HCT116 (cell line): ENCODE measurements at regions of chr5 and their contacts with region 1.

Region 1: DNA sequence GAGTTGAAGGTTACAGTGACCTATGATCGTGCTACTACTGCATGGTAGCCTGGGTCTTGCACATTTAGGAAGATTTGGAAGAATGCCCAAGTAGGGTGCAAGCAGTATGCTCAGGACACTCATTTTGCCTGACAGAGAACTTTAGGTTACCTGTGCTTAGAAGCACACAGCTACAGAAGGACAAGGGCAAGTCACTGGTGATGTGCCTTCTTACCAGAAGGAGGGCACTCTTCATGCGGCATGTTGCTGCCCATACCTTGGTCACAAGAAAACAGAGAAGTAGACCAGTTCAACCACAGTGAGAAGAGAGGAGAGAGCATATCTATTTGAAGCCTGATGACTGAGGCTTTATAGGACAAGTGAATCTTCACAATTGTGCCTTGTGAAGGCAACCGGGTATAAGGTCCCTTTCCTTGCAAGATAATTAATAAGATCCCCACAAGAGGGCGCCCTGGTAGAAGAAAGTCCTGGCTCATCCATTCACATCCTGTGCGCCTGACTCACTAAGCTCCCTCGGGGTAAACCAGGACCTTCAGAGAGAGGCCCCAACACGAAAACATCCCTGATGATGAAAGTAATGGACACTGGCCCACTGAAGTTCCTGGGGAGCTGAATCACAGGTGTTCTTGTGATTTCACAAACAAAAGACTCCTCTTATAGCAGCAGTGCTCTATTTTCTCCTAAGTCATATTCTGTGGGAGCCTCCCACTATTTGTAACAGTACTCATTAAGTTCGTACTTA is 38.1 kb upstream of the STARD4 start:
- DNase-seq: peak; percentile 71
- ATAC-seq: peak; percentile 99
- H3K4me3 ChIP-seq: no peak overlapping the region
- H3K27ac ChIP-seq: no peak overlapping the region
- H3K4me1 ChIP-seq: no peaks in the 10 kb centered on the region
- H3K27me3 ChIP-seq: peaks cover 5% of the 10 kb centered on the region; the same call in 1 of the 2 replicates
- CTCF ChIP-seq: peak; percentile 45 to 68 (median 60); a peak in 4 of 6 replicates
- POLR2A ChIP-seq: no peak
- RAD21 ChIP-seq: peak; percentile 81

Region 2: GRCh38 chr5:111158105-111158744 is 392.2 kb before region 1 on chr5:
- CTCF ChIA-PET with region 1: interaction called, 4 read pairs
- POLR2A ChIA-PET with region 1: no interaction called
- RAD21 ChIA-PET with region 1: no interaction called
- intact Hi-C with region 1: loop called (anchors 10 kb)
- DNase-seq: peak; percentile 69
- ATAC-seq: peak; percentile 88
- H3K4me3 ChIP-seq: no peak overlapping the region
- H3K27ac ChIP-seq: no peak overlapping the region
- H3K4me1 ChIP-seq: no peaks in the 10 kb centered on the region
- H3K27me3 ChIP-seq: no peaks in the 10 kb centered on the region
- CTCF ChIP-seq: peak; percentile 77 to 99 (median 99)
- POLR2A ChIP-seq: no peak
- RAD21 ChIP-seq: peak; percentile 95

Region 3: GRCh38 chr5:111237470-111237869 is 313.0 kb before region 1 on chr5:
- CTCF ChIA-PET with region 1: no interaction called
- POLR2A ChIA-PET with region 1: no interaction called
- RAD21 ChIA-PET with region 1: no interaction called
- intact Hi-C with region 1: no loop called
- DNase-seq: no peak
- ATAC-seq: no peak
- H3K4me3 ChIP-seq: no peak overlapping the region
- H3K27ac ChIP-seq: no peak overlapping the region
- H3K4me1 ChIP-seq: no peaks in the 10 kb centered on the region
- H3K27me3 ChIP-seq: peaks cover 4% of the 10 kb centered on the region; the same call in 1 of the 2 replicates
- CTCF ChIP-seq: no peak
- POLR2A ChIP-seq: no peak
- RAD21 ChIP-seq: no peak

Region 4: GRCh38 chr5:111394580-111394979 is 155.9 kb before region 1 on chr5:
- CTCF ChIA-PET with region 1: no interaction called
- POLR2A ChIA-PET with region 1: no interaction called
- RAD21 ChIA-PET with region 1: no interaction called
- intact Hi-C with region 1: no loop called
- DNase-seq: no peak
- ATAC-seq: no peak
- H3K4me3 ChIP-seq: no peak overlapping the region
- H3K27ac ChIP-seq: no peak overlapping the region
- H3K4me1 ChIP-seq: peaks cover 0 to 3% of the 10 kb centered on the region in 2 experiments; a peak in 2 of 4 replicates
- H3K27me3 ChIP-seq: no peaks in the 10 kb centered on the region
- CTCF ChIP-seq: no peak
- POLR2A ChIP-seq: no peak
- RAD21 ChIP-seq: no peak

Region 5: DNA sequence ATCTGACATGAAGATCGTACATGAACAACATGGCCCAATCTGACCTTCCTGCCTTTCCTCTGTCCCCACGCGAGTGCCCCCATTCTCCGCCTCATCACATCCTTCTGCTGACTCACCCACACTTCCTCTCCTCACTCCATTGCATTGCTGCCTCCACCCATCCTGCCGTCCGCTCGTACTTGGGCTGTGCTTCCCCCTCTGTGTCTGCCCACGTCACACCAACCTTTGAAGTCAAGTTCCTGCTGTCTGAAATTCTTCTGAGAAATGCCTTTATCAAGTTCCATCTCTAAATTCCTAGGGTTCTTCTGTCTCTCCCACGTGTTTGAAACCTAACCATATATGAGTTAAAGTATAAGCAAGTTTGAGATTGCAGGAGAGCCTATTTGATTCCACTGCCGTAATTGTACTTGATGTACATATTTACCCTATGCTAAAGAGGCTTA is 20.1 kb before region 1 on chr5:
- CTCF ChIA-PET with region 1: interaction called, 16 read pairs
- POLR2A ChIA-PET with region 1: interaction called, 5 read pairs
- RAD21 ChIA-PET with region 1: no interaction called
- intact Hi-C with region 1: no loop called
- DNase-seq: peak; percentile 61
- ATAC-seq: peak; percentile 97
- H3K4me3 ChIP-seq: peak overlapping the region; percentile 7 to 31
- H3K27ac ChIP-seq: peak overlapping the region; percentile 49
- H3K4me1 ChIP-seq: peaks cover 0 to 19% of the 10 kb centered on the region in 2 experiments; a peak in 3 of 4 replicates
- H3K27me3 ChIP-seq: no peaks in the 10 kb centered on the region
- CTCF ChIP-seq: no peak
- POLR2A ChIP-seq: peak; percentile 37
- RAD21 ChIP-seq: no peak

Region 6: DNA sequence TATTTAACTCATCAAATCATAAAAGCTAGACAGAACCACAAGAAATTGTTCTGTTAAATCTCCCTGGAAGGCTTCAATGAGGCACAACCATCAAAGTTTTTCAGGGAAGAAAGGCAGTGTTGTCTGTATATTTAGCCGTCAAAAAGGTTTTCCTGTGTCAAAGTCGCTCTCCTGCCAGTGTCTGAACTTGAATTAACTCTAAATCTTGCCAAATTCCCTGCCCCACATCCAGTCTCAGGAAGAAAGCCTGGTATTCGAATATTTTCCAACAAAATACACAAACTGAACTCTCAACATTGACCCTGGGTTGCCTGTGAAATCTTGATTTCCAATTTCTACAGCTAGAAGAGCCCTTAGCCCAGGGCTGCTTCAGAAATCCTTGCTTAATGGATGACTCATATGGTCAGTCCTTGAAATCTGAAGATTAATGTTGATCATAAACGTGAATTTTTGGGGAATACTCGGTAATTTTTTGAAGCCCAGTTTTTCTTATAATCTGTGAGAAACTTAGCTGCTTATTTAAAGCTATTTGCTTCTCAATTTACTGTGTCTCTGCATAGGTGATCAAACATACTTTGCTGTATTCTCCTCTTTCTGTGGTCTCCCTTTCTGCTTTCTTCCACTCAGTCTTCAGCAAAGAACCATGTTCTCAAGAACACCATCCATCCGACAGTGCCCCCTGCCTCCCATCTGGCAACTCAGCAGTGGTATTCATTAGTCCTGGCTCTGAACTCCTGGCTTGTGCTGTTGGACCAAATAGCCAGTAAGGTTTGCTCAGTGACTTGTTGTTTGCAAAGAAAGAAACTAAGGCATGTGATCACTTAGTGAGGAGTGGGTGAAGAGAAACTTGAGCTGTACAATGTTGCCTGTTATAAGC is 147.7 kb after region 1 on chr5:
- CTCF ChIA-PET with region 1: no interaction called
- POLR2A ChIA-PET with region 1: no interaction called
- RAD21 ChIA-PET with region 1: no interaction called
- intact Hi-C with region 1: loop called (anchors 5 kb)
- DNase-seq: no peak
- ATAC-seq: peak; percentile 49; the same call in 1 of the 2 replicates
- H3K4me3 ChIP-seq: no peak overlapping the region
- H3K27ac ChIP-seq: no peak overlapping the region
- H3K4me1 ChIP-seq: no peaks in the 10 kb centered on the region
- H3K27me3 ChIP-seq: no peaks in the 10 kb centered on the region; the same call in 1 of the 2 replicates
- CTCF ChIP-seq: peak in 2 of 3 experiments; percentile 21 to 32; a peak in 2 of 6 replicates
- POLR2A ChIP-seq: no peak
- RAD21 ChIP-seq: peak; percentile 35; the same call in 1 of the 2 replicates

Region 7: DNA sequence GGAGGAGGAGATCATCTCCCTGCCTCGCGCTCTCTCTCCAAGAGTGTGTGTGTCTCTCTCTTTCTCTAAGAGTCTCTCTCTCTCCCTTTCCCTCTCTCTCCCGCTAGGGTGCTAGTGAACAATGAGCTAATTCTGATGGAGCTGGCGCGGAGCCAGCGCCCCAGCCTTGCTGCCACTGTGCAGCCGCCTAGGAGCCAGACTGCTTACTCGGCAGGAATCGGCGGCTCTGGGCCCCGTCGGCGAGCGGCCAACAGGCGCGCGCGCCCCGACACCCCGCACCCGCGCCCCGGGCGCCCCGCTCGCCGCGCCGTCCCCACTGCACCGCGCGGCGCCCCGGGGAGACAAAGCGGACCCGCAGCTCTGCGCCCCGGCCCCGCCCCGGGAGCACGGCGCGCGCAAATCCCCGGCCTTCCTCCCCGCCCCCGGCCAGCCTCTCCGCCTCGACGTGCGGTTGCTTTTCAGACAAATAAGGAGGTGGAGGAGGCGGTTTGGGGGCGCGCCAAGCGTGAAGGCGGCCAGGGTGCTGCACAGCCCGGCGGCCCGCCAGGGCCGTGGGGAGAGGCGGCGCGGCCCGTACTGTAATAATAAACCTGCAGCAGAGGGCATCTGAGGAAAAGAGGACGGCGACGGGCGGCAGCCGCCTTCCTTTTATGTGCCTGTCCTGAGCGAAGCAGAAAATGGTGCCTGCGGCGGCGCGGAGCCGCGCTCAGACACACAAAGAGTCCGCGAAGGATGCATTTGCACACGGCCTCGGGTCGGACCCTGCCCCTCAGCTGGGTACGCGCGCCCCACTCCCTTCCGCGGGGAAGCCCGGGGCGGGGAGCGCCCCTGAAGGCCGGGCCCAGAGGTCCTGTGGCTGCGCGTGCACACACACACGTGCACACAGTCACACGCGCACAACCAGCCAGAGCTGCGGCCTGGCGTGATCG is 207.2 kb after region 1 on chr5:
- CTCF ChIA-PET with region 1: interaction called, 5 read pairs
- POLR2A ChIA-PET with region 1: interaction called, 3 read pairs
- RAD21 ChIA-PET with region 1: no interaction called
- intact Hi-C with region 1: loop called (anchors 5 kb)
- DNase-seq: peak; percentile 71
- ATAC-seq: peak; percentile 88
- H3K4me3 ChIP-seq: peak overlapping the region; percentile 44 to 61
- H3K27ac ChIP-seq: peak overlapping the region; percentile 64
- H3K4me1 ChIP-seq: peaks cover 3 to 15% of the 10 kb centered on the region in 2 experiments
- H3K27me3 ChIP-seq: no peaks in the 10 kb centered on the region
- CTCF ChIP-seq: peak in 2 of 3 experiments; percentile 38 to 44; a peak in 3 of 6 replicates
- POLR2A ChIP-seq: peak; percentile 14
- RAD21 ChIP-seq: 0 out of 2 replicates have a peak, but pooled peaks have one; percentile 3

Region 8: DNA sequence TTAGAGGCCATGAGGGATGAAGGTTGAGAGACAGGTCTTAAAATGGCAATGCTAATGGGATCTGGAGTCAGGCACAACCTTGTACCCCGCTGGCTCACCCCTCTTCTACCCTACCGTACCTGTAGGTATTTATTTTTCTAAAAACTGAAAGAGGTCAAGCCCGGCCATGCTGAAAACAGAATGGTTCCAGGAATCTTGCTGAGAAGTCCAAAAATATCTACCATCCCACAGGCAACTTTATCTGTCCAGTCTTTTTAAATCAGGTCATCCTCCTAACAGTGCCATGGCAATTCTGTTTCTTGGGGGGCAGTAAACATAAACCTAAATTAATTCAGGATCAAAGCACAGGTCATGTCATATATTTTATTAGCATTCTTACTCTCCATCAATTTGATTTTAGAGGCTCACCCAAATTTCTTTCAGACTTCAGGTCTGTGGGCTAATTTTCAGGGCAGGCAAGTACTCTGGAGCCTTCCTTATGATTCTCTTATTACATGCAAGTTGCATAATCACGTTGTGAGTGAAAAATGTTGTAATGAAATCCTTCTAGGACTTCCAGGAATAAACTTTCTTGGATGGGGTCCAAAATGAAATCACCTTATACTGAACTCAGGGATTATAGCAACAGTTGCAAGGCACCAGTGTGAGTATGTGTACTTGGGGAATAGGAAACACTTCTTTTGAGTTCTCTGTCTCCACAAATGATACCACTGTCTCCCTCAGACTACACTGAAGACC is 309.3 kb after region 1 on chr5:
- CTCF ChIA-PET with region 1: no interaction called
- POLR2A ChIA-PET with region 1: no interaction called
- RAD21 ChIA-PET with region 1: no interaction called
- intact Hi-C with region 1: no loop called
- DNase-seq: no peak
- ATAC-seq: no peak
- H3K4me3 ChIP-seq: no peak overlapping the region
- H3K27ac ChIP-seq: no peak overlapping the region
- H3K4me1 ChIP-seq: no peaks in the 10 kb centered on the region
- H3K27me3 ChIP-seq: no peaks in the 10 kb centered on the region
- CTCF ChIP-seq: no peak
- POLR2A ChIP-seq: no peak
- RAD21 ChIP-seq: no peak